CD8-positive, alpha-beta T cell (primary cell): ENCODE measurements at regions of chr1 and their contacts with region 1.

Region 1: GRCh38 chr1:85109475-85109874 is 61.2 kb upstream of the MCOLN3 start:
- DNase-seq: peak in 7 of 9 experiments; percentile 6 to 70 (median 50)
- ATAC-seq: peak; percentile 81
- H3K4me3 ChIP-seq: no peak overlapping the region
- H3K4me3 Mint-ChIP-seq: no peak overlapping the region
- H3K27ac ChIP-seq: no peak overlapping the region
- H3K27ac Mint-ChIP-seq: no peak overlapping the region
- H3K4me1 ChIP-seq: no peaks in the 10 kb centered on the region
- H3K4me1 Mint-ChIP-seq: no peaks in the 10 kb centered on the region
- H3K27me3 ChIP-seq: no peaks in the 10 kb centered on the region
- H3K27me3 Mint-ChIP-seq: peaks cover 3% of the 10 kb centered on the region
- CTCF ChIP-seq: peak; percentile 68

Region 2: DNA sequence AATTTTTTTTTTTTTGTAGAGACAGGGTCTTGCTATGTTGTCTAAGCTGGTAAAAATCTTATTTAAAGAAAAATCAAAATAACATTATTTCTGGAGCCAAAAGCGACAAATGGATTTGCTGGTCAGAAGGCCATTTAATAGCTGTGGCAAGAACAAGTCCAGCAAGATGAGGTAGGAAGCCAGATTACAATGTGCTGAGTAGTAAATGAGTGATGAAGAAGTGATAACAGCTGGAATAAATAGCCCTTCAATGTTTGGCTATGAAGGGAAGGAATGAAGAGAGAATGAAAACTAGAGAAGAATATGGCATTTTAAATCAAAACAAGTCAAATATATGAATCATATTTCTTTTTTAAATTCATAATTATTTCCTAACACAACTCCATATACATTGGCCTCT is 56.9 kb after region 1 on chr1:
- CTCF ChIA-PET with region 1: no interaction called
- POLR2A ChIA-PET with region 1: no interaction called
- intact Hi-C with region 1: loop called in 1 of 2 experiments (anchors 5 kb)
- DNase-seq: no peak
- ATAC-seq: no peak
- H3K4me3 ChIP-seq: no peak overlapping the region
- H3K4me3 Mint-ChIP-seq: no peak overlapping the region
- H3K27ac ChIP-seq: no peak overlapping the region
- H3K27ac Mint-ChIP-seq: no peak overlapping the region
- H3K4me1 ChIP-seq: peaks cover under 1% of the 10 kb centered on the region
- H3K4me1 Mint-ChIP-seq: peaks cover 6% of the 10 kb centered on the region
- H3K27me3 ChIP-seq: no peaks in the 10 kb centered on the region
- H3K27me3 Mint-ChIP-seq: no peaks in the 10 kb centered on the region
- CTCF ChIP-seq: no peak

Region 3: GRCh38 chr1:85240174-85240601 is 130.7 kb after region 1 on chr1:
- CTCF ChIA-PET with region 1: interaction called, 8 read pairs
- POLR2A ChIA-PET with region 1: no interaction called
- intact Hi-C with region 1: loop called in 1 of 2 experiments (anchors 1 kb)
- DNase-seq: peak in 2 of 9 experiments; percentile 35 to 47
- ATAC-seq: peak; percentile 61
- H3K4me3 ChIP-seq: no peak overlapping the region
- H3K4me3 Mint-ChIP-seq: no peak overlapping the region
- H3K27ac ChIP-seq: no peak overlapping the region
- H3K27ac Mint-ChIP-seq: no peak overlapping the region
- H3K4me1 ChIP-seq: no peaks in the 10 kb centered on the region
- H3K4me1 Mint-ChIP-seq: peaks cover 13% of the 10 kb centered on the region
- H3K27me3 ChIP-seq: peaks cover 0 to 3% of the 10 kb centered on the region in 2 experiments
- H3K27me3 Mint-ChIP-seq: peaks cover 14% of the 10 kb centered on the region
- CTCF ChIP-seq: no peak